CD4-positive, alpha-beta T cell (primary cell): ENCODE measurements at regions of chr9 and their contacts with region 1.

Region 1: GRCh38 chr9:98848450-98849149 is 41.1 kb downstream of the GALNT12 start:
- DNase-seq: peak; percentile 58 to 83 (median 68)
- ATAC-seq: peak; percentile 84
- H3K4me3 ChIP-seq: no peak overlapping the region
- H3K4me3 Mint-ChIP-seq: no peak overlapping the region
- H3K27ac ChIP-seq: no peak overlapping the region
- H3K27ac Mint-ChIP-seq: no peak overlapping the region
- H3K4me1 ChIP-seq: no peaks in the 10 kb centered on the region
- H3K4me1 Mint-ChIP-seq: no peaks in the 10 kb centered on the region
- H3K27me3 ChIP-seq: no peaks in the 10 kb centered on the region
- H3K27me3 Mint-ChIP-seq: no peaks in the 10 kb centered on the region
- CTCF ChIP-seq: peak; percentile 97

Region 2: DNA sequence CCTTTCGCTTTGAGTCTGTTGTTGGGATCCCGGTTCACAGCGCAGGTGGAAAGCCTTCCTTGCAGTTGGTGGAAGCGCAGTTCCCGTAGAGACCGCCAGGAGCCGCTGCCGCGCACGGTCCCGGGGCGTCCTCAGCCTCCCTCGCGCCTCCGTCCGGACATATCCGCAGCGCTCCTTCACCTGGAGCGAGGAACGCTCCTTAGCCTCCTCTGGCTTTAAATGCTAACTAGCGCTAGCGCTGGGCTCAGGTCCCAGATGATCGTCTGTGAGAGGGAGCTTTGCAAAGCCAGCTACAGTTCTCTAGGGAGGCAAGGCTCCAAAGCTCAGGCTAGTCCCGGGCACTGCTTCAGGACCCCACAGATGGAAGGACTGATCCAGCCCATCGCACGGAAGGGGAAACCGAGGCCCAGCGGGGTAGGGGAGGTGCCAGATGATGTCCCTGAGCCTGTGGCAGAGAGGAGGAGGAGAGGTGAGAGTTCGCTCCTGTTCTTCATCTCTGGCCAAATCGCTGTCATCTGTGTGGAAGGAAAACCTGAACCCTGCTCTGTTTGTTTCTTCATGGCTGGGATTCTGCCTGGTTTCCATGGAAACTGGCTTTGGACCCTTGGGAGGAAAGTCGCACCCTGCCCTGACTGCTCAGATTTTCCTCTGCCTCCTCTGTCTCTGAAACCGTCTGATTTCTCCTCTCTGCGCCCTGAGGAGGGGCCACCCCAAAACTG is 126.6 kb after region 1 on chr9:
- CTCF ChIA-PET with region 1: no interaction called
- POLR2A ChIA-PET with region 1: no interaction called
- intact Hi-C with region 1: loop called in 1 of 2 experiments (anchors 2 kb)
- DNase-seq: peak; percentile 58 to 87 (median 74)
- ATAC-seq: peak; percentile 99
- H3K4me3 ChIP-seq: peak overlapping the region; percentile 25
- H3K4me3 Mint-ChIP-seq: peak overlapping the region; percentile 28
- H3K27ac ChIP-seq: no peak overlapping the region
- H3K27ac Mint-ChIP-seq: no peak overlapping the region
- H3K4me1 ChIP-seq: peaks cover 9% of the 10 kb centered on the region
- H3K4me1 Mint-ChIP-seq: no peaks in the 10 kb centered on the region
- H3K27me3 ChIP-seq: peaks cover 0 to 6% of the 10 kb centered on the region in 2 experiments
- H3K27me3 Mint-ChIP-seq: peaks cover 10% of the 10 kb centered on the region
- CTCF ChIP-seq: peak; percentile 97

Region 3: GRCh38 chr9:98998441-98999151 is 150.0 kb after region 1 on chr9:
- CTCF ChIA-PET with region 1: no interaction called
- POLR2A ChIA-PET with region 1: no interaction called
- intact Hi-C with region 1: loop called (anchors 1 kb)
- DNase-seq: peak; percentile 23 to 70 (median 42)
- ATAC-seq: peak; percentile 46
- H3K4me3 ChIP-seq: no peak overlapping the region
- H3K4me3 Mint-ChIP-seq: no peak overlapping the region
- H3K27ac ChIP-seq: no peak overlapping the region
- H3K27ac Mint-ChIP-seq: no peak overlapping the region
- H3K4me1 ChIP-seq: peaks cover 20% of the 10 kb centered on the region
- H3K4me1 Mint-ChIP-seq: peaks cover 26% of the 10 kb centered on the region
- H3K27me3 ChIP-seq: no peaks in the 10 kb centered on the region
- H3K27me3 Mint-ChIP-seq: no peaks in the 10 kb centered on the region
- CTCF ChIP-seq: peak; percentile 72